ENCODE measurements at regions of chr18 and their contacts with region 1.

Region 1: DNA sequence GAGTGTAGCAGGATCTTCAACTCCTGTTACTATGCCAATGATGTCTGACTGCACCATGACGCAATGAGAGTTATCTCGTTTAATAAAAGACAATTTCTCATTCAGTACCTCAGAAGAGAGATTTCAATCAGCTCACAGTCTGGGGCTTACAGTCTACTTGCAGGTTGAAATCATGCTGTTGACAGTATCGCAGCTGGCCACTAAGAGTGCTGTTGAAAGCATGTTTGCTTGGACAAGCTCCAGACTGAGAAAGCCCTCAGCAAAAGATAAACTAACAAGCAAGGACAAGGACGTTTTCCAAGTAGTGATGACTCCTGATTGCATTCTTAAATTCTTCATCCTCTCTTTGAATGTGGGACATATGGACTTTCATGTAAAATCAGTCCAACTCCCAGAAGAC is 145.2 kb upstream of the SYT4 start:
- DNase-seq: peak; percentile 27
- H3K4me3 Mint-ChIP-seq: no peak overlapping the region
- H3K27ac Mint-ChIP-seq: no peak overlapping the region
- H3K4me1 Mint-ChIP-seq: no peaks in the 10 kb centered on the region
- H3K27me3 Mint-ChIP-seq: peaks cover 41% of the 10 kb centered on the region
- CTCF ChIP-seq: no peak

Region 2: DNA sequence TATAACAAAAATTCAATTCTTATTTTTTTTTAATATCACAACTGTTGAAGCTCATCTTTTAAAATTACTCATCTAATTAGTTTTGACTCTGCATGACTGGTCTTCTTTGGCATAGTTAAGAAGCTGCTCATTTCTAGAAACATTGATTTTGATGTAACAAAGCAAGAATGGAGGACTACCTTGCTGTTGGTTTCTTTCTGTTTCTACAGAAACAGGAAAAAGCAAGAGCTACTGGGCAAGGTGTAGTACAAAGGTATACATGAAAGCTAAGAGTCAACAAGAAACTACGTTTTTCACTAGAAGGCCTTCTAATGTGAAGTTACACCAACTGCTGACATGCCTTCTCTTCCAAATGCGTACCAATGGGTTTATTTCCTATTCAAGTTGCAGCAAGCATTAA is 54.6 kb before region 1 on chr18:
- CTCF ChIA-PET with region 1: no interaction called
- POLR2A ChIA-PET with region 1: interaction called, 3 read pairs
- intact Hi-C with region 1: loop called (anchors 10 kb)
- DNase-seq: no peak
- H3K4me3 Mint-ChIP-seq: no peak overlapping the region
- H3K27ac Mint-ChIP-seq: no peak overlapping the region
- H3K4me1 Mint-ChIP-seq: no peaks in the 10 kb centered on the region
- H3K27me3 Mint-ChIP-seq: peaks cover 42% of the 10 kb centered on the region
- CTCF ChIP-seq: no peak

Region 3: GRCh38 chr18:43606795-43607194 is 184.3 kb after region 1 on chr18:
- CTCF ChIA-PET with region 1: no interaction called
- POLR2A ChIA-PET with region 1: no interaction called
- intact Hi-C with region 1: no loop called
- DNase-seq: no peak
- H3K4me3 Mint-ChIP-seq: no peak overlapping the region
- H3K27ac Mint-ChIP-seq: no peak overlapping the region
- H3K4me1 Mint-ChIP-seq: no peaks in the 10 kb centered on the region
- H3K27me3 Mint-ChIP-seq: peaks cover 35% of the 10 kb centered on the region
- CTCF ChIP-seq: no peak

Measured in MCF 10A (cell line).